A673 (cell line): ENCODE measurements at regions of chr10 and their contacts with region 1.

Region 1: DNA sequence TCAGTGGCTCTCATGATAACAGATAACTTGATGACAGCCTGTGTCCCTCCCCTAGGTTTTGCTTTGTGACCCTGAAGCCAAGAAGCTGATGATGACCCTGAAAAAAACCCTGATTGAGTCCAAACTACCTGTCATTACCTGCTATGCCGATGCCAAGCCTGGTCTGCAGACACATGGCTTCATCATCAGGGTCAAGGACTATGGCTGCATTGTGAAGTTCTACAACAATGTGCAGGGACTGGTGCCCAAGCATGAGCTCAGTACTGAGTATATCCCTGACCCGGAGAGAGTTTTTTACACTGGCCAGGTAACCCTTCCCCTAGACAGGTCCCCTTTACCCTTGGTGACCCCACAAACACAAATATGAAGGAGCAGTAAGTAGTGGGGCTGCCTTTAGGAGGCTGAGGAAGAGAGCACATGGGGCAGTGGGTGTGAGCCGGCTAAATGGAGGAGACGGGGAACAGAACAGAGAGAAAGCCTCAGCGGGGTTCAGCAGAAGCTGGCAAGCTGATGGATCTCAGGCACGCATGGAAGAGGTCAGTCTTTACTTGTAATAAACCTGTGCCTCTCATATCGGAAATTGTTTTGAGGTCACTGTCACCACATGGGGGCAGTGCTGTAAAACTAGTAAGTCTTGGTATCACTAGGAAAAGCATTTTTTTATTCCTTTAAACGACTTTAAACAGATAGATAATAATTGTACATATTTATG is 20.2 kb downstream of the PDCD11 start:
- DNase-seq: peak; percentile 59
- H3K4me3 ChIP-seq: no peak overlapping the region
- H3K27ac ChIP-seq: no peak overlapping the region
- H3K4me1 ChIP-seq: no peaks in the 10 kb centered on the region
- H3K27me3 ChIP-seq: no peaks in the 10 kb centered on the region
- CTCF ChIP-seq: peak; percentile 60

Region 2: DNA sequence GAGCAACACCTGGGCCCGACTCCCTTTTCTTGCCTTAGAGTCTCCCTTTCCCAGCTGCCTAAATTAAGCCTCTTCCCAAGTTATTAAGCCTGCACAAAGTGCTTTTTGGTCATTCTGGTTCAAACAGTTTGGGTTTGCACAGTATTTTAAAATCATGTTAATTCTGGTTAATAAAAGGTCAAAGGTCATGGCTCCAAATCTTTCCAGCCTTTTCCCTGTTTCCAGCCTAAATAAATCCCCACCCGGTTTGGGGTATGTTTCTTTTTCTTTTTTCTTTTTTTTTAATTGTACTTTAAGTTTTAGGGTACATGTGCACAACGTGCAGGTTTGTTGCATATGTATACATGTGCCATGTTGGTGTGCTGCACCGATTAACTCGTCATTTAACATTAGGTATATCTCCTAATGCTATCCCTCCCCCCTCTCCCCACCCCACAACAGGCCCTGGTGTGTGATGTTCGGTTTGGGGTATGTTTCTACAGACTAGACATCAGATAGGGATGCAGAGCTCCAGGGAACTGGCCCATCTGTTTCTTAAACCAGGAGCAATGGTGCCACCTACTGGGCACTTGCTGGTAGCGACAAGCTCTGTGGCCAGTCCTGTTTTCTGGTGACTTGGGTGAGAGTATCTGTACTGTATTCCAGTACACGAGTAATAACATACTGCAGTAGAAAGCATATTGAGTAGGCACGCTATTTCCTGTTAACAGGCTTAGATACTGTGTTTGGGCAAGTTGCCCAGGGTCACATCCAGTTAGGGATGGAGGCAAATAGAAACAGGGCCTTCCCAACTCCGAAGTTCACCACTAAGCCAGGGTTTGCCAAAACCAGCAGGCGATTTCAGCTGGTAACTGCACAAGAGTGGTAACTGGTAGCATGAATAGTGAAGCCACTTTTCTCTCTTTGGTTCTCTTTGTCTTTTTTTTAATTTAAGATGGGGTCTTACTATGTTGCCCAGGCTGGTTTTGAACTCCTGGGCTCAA is 832.9 kb before region 1 on chr10:
- CTCF ChIA-PET with region 1: no interaction called
- POLR2A ChIA-PET with region 1: no interaction called
- intact Hi-C with region 1: no loop called
- DNase-seq: peak; percentile 90
- H3K4me3 ChIP-seq: no peak overlapping the region
- H3K27ac ChIP-seq: no peak overlapping the region
- H3K4me1 ChIP-seq: peaks cover 18% of the 10 kb centered on the region
- H3K27me3 ChIP-seq: no peaks in the 10 kb centered on the region
- CTCF ChIP-seq: peak; percentile 87

Region 3: GRCh38 chr10:103481974-103482531 is 65.5 kb after region 1 on chr10:
- CTCF ChIA-PET with region 1: no interaction called
- POLR2A ChIA-PET with region 1: no interaction called
- intact Hi-C with region 1: loop called (anchors 5 kb)
- DNase-seq: peak; percentile 70
- H3K4me3 ChIP-seq: no peak overlapping the region
- H3K27ac ChIP-seq: no peak overlapping the region
- H3K4me1 ChIP-seq: no peaks in the 10 kb centered on the region
- H3K27me3 ChIP-seq: no peaks in the 10 kb centered on the region
- CTCF ChIP-seq: peak; percentile 79

Region 4: GRCh38 chr10:103592186-103593021 is 175.8 kb after region 1 on chr10:
- CTCF ChIA-PET with region 1: interaction called, 3 read pairs
- POLR2A ChIA-PET with region 1: no interaction called
- intact Hi-C with region 1: loop called (anchors 2 kb)
- DNase-seq: peak; percentile 51
- H3K4me3 ChIP-seq: no peak overlapping the region
- H3K27ac ChIP-seq: no peak overlapping the region
- H3K4me1 ChIP-seq: no peaks in the 10 kb centered on the region
- H3K27me3 ChIP-seq: no peaks in the 10 kb centered on the region
- CTCF ChIP-seq: peak; percentile 75